SK-N-SH (cell line): ENCODE measurements at regions of chr4 and their contacts with region 1.

Region 1: GRCh38 chr4:122914292-122914904 is 8.0 kb downstream of the NUDT6 start:
- DNase-seq: peak; percentile 35
- H3K4me3 ChIP-seq: no peak overlapping the region
- H3K27ac ChIP-seq: peak overlapping the region in 1 of 2 experiments; percentile 30; a peak in 1 of 4 replicates
- H3K4me1 ChIP-seq: peaks cover 0 to 11% of the 10 kb centered on the region in 2 experiments; a peak in 2 of 4 replicates
- H3K27me3 ChIP-seq: no peaks in the 10 kb centered on the region
- CTCF ChIP-seq: peak; percentile 72
- EP300 ChIP-seq: 0 out of 4 replicates have a peak, but pooled peaks of 1 of the 2 experiments have one; percentile 8
- RAD21 ChIP-seq: peak; percentile 85

Region 2: GRCh38 chr4:122602277-122603142 is 311.9 kb before region 1 on chr4:
- CTCF ChIA-PET with region 1: interaction called, 10 read pairs
- POLR2A ChIA-PET with region 1: no interaction called
- DNase-seq: peak; percentile 8
- H3K4me3 ChIP-seq: peak overlapping the region; percentile 18 to 24; a peak in 2 of 4 replicates
- H3K27ac ChIP-seq: no peak overlapping the region
- H3K4me1 ChIP-seq: no peaks in the 10 kb centered on the region; a peak in 1 of 4 replicates
- H3K27me3 ChIP-seq: no peaks in the 10 kb centered on the region
- CTCF ChIP-seq: peak; percentile 68
- EP300 ChIP-seq: no peak
- RAD21 ChIP-seq: peak; percentile 69

Region 3: DNA sequence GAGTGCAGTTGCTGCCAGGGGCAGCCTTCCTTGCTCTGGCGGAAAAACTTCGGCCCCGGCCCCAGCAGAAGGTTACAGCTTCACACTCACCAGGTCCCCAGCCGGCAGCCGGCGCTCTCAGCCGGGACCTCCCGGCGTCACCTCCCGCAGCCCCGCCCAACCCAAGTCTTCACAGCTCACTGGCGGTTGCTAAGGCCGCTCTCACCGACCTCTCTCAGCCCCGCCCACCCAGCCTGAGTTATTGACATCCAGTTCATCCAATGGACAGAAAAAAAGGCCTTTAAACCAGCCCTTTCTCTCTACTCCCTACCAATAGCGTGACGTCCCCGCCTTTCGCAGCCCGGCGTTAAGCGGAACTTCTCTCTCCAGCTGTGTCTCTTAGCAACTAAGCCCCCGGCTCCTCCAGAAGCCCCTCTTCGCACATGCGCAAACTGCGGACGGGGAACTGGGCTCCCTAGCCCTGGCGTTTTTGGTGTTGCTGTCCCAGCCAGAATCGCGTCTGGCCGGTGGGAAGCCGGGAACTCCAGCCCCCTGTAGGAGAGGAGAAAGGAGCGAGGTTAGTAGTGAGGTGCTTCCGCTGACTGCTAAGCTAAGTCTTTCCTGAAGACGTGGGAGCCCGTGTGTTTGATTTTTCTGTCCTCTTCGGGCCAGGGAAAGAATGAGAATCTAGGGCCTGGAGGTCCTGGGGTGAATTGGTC is 181.9 kb before region 1 on chr4 and contains the start of gene BBS12:
- CTCF ChIA-PET with region 1: interaction called, 13 read pairs
- POLR2A ChIA-PET with region 1: no interaction called
- DNase-seq: peak; percentile 95
- H3K4me3 ChIP-seq: peak within 1 kb of the TSS; percentile 70 to 88
- H3K27ac ChIP-seq: peak within 1 kb of the TSS; percentile 77 to 94
- H3K4me1 ChIP-seq: peaks cover 0 to 8% of the 10 kb centered on the region in 2 experiments; a peak in 3 of 4 replicates
- H3K27me3 ChIP-seq: no peaks in the 10 kb centered on the region
- CTCF ChIP-seq: peak; percentile 58
- EP300 ChIP-seq: no peak
- RAD21 ChIP-seq: peak; percentile 51
- polyA plus RNA-seq, gene BBS12: 1.5 and 2.1 TPM in 2 replicates

Region 4: DNA sequence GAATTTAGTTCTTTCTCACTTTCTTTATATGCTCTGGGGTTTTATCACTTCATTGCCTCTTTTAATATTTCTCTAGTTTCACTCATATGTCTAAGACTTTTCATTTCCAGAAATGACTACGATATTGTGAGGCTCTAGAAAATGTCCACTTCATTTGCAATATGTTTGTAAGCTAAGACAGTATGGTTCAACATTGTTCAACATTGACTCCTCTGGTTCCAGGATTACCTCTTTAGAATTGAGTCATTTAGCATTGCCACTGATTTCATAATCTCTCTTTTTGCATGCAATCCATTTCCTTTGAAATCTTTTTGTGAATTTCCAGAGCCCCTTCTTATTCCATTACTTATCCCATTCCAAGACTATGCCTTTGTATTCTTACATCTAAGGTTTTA is 149.6 kb before region 1 on chr4:
- CTCF ChIA-PET with region 1: interaction called, 126 read pairs
- POLR2A ChIA-PET with region 1: no interaction called
- DNase-seq: no peak
- H3K4me3 ChIP-seq: peak overlapping the region; percentile 18 to 37; a peak in 3 of 4 replicates
- H3K27ac ChIP-seq: peak overlapping the region; percentile 85 to 91; a peak in 3 of 4 replicates
- H3K4me1 ChIP-seq: peaks cover 2 to 12% of the 10 kb centered on the region in 2 experiments; a peak in 3 of 4 replicates
- H3K27me3 ChIP-seq: no peaks in the 10 kb centered on the region
- CTCF ChIP-seq: no peak
- EP300 ChIP-seq: 0 out of 4 replicates have a peak, but pooled peaks of 1 of the 2 experiments have one; percentile 12
- RAD21 ChIP-seq: no peak

Region 5: DNA sequence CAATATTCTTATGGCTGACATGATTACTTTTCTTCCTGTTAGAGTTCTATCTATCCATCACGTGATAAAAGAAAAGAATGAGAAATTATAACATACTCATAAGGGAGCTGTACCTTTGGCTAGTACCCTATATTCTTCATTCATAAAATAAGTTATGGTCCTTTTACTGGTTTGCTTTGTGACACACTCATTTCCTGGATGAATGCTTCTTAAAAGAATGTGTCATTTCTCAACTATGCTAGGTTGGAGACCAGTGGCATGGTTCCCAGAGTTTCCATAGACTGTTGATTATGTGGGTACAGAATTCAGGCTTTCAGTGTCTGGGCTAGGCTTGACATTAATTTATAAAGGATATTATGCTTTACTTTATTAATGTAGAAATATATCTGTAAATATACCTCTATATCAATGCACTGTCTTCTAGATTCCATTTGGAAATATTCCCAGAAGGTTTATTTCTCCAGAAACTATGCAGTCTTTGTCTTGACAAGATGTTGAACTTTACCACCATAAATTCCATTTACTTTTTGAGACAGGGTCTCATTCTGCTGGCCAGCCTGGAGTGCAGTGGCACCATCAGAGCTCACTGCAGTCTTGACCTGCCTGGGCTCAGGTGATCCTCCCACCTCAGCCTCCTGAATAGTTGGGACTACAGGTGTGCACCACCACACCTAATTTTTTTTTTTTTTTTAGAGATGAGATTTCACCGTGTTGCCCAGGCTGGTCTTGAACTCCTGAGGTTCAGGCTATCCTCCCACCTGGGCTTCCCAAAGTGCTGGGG is 15.8 kb before region 1 on chr4:
- CTCF ChIA-PET with region 1: interaction called, 20 read pairs
- POLR2A ChIA-PET with region 1: no interaction called
- DNase-seq: no peak
- H3K4me3 ChIP-seq: no peak overlapping the region
- H3K27ac ChIP-seq: peak overlapping the region; percentile 78 to 92; a peak in 3 of 4 replicates
- H3K4me1 ChIP-seq: peaks cover 3 to 55% of the 10 kb centered on the region in 2 experiments; a peak in 3 of 4 replicates
- H3K27me3 ChIP-seq: no peaks in the 10 kb centered on the region
- CTCF ChIP-seq: no peak
- EP300 ChIP-seq: peak; percentile 24 to 94; a peak in 3 of 4 replicates
- RAD21 ChIP-seq: no peak

Region 6: DNA sequence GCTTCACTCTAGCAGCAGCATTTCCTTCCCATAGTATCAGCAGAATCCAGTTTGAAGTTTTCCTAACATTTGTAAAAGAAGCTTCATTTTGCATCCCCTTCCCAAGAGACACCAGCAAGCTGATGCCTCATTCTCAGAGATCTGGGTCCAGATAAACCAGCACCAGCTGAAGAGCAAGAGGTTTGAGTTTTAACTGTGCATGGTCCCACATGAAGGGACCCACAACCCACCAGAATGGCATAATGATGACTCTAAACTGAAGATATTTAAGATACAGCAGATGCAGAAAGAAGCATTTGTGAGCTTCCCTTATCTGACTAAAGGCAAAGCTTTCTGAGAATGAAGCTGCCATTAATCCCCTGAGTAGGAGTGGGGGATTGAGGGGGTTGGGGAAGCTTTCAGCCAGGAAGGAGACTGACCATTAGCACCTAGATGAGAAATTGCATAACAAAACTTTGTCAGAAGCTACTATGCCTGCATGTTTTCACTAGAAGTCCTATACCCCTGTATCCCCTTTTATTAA is 10.6 kb before region 1 on chr4:
- CTCF ChIA-PET with region 1: interaction called, 20 read pairs
- POLR2A ChIA-PET with region 1: no interaction called
- DNase-seq: no peak
- H3K4me3 ChIP-seq: no peak overlapping the region
- H3K27ac ChIP-seq: no peak overlapping the region
- H3K4me1 ChIP-seq: peaks cover 0 to 30% of the 10 kb centered on the region in 2 experiments; a peak in 3 of 4 replicates
- H3K27me3 ChIP-seq: no peaks in the 10 kb centered on the region
- CTCF ChIP-seq: no peak
- EP300 ChIP-seq: no peak
- RAD21 ChIP-seq: no peak

Region 7: DNA sequence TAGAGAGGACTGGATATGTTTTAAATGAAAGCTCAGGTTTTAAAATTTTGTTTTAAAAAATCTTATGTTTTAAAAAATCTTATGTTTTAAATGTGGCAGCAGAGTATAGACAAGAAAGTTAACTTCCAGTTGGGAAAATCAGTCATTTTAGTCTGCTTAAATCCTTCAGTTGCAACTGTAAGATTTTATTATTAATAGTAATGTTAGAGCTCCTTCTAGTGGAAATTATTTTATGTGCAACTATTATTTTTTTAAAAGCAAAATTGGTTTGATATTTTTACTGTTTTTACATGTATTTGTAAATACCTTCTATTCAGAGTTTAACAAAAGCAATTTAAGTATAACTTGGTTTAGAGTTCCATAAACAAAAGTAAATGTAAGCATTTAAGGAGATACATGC is 16.5 kb after region 1 on chr4:
- CTCF ChIA-PET with region 1: interaction called, 14 read pairs
- POLR2A ChIA-PET with region 1: no interaction called
- DNase-seq: no peak
- H3K4me3 ChIP-seq: no peak overlapping the region
- H3K27ac ChIP-seq: no peak overlapping the region
- H3K4me1 ChIP-seq: peaks cover 0 to 2% of the 10 kb centered on the region in 2 experiments; a peak in 2 of 4 replicates
- H3K27me3 ChIP-seq: no peaks in the 10 kb centered on the region
- CTCF ChIP-seq: peak; percentile 82
- EP300 ChIP-seq: no peak
- RAD21 ChIP-seq: peak; percentile 54